ENCODE measurements at regions of chr2 and their contacts with region 1.

Region 1: DNA sequence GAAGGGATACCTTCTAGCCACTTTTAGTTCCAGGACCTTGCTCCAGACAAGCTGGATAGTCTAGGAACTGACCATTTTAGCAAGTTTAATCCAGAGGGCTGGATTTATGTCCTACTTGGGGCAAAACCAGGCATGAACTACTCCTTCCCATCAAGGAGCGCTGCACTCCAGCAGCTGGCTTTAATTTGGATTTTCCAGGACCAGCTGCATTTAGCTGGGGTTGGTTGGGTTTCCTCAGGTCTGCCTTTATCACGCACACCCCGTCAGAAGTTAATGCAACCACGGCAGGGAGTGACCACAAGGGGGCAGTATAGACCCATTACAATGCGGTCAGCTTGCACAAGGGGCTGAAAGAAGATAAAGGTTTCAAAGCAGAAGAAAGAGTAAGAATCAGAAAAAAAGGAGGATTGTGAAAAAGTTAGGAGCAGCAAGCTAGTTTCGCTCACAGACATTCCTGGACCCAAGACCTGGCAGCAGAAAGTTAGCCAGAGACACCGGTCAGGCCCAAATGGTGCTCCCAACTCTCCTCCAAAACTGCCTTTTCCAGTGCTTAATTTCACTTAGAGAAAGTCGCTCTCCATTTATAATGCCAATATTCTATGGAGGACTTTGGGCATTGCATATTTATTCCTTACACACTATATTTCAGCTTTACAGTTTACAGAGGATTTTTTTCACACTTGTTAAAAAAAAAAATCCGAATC is 40.1 kb downstream of the SLC4A1AP start:
- DNase-seq: peak; percentile 82 to 93 (median 90)
- H3K4me3 ChIP-seq: no peak overlapping the region
- H3K27ac ChIP-seq: peak overlapping the region in 1 of 2 donors; percentile 43
- H3K4me1 ChIP-seq: peaks cover 0 to 4% (median 2%) of the 10 kb centered on the region in 3 donors
- H3K27me3 ChIP-seq: no peaks in the 10 kb centered on the region
- CTCF ChIP-seq: peak; percentile 95

Region 2: DNA sequence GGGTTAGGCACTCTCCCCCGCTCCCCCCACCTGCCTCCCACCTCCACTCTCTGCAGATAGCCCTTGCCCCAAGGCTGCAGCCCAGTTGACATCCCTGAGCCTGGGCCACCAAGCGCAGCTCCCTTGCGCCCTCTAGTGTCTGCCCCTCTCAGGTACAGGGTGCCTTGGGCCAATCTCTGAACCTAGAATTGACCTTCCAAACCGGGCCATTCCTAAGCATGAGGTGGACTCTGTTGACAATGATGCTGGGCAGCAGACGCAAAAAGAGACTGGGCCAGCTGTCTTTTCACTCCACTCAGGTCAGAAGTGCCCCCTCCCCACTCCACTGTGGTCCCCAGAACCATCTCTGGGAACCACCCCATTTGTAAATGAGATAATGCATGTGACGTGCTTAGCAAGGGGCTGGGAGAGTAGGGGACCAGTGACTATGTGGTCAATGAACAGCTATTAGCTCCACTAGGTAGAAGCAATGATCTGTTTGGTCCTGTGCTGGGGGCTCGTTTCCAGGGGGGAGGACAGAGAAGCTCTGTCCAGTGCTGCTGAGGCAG is 748.8 kb after region 1 on chr2:
- intact Hi-C with region 1: loop called (anchors 10 kb)
- DNase-seq: peak; percentile 53 to 86 (median 64)
- H3K4me3 ChIP-seq: no peak overlapping the region
- H3K27ac ChIP-seq: no peak overlapping the region
- H3K4me1 ChIP-seq: no peaks in the 10 kb centered on the region
- H3K27me3 ChIP-seq: no peaks in the 10 kb centered on the region
- CTCF ChIP-seq: peak; percentile 93

Measured in kidney (tissue), 22 donors.